Sigmoid colon (tissue), 7 donors: ENCODE measurements at regions of chr3 and their contacts with region 1.

Region 1: DNA sequence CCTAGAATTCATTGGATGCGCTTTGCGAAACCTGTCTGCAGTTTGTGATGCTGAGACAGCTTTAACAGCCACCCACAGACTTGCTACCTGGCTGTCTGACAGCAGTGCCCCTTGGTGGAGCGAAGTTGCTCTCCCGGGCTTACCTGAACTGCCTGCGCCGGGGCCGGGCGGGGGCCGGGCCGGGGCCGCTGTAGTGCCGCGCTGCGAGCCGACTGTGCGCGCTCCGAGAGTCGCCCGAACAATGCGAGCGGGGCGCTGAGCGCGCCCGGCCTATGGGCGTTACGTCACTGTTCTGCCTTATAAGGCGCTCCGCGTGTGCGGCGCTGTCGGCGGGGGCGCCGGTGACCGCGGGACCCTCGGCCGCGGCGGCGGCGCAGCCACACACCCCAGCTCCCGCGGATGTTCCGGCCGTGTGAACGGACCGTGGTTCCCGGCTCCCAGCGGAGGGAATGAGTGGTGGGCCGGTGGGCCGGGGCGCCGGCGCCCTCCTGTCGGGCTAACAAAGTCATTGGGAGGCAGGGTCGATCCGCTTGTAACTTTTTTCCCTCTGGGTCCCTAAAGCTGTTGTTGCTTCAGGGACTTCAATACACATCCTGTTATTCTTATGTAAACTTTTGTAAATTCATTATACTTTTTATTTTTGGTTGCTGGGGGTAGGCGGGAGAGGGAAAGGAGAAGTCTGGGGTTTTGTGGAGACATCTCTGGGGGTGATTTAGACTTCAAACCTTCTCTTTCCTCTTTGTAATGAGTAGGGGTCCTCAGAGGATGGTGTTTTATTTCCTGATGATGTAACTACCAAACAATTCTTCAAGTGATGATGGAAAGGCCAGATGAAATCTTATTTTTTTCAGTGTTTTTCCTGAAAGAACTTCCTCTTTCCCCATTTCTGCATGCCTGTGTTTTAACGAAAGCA is 58.5 kb downstream of the CMSS1 start:
- DNase-seq: peak; percentile 93
- H3K4me3 ChIP-seq: peak overlapping the region; percentile 62 to 82 (median 66)
- H3K27ac ChIP-seq: peak overlapping the region; percentile 90 to 95 (median 93)
- H3K4me1 ChIP-seq: peaks cover 4 to 40% (median 24%) of the 10 kb centered on the region in 4 donors
- H3K27me3 ChIP-seq: no peaks in the 10 kb centered on the region
- CTCF ChIP-seq: no peak
- EP300 ChIP-seq: no peak
- POLR2A ChIP-seq: peak; percentile 68 to 85

Region 2: GRCh38 chr3:99925584-99926212 is 49.5 kb after region 1 on chr3:
- intact Hi-C with region 1: loop called (anchors 5 kb)
- DNase-seq: peak; percentile 79
- H3K4me3 ChIP-seq: no peak overlapping the region
- H3K27ac ChIP-seq: peak overlapping the region; percentile 36 to 84 (median 54)
- H3K4me1 ChIP-seq: peaks cover 0 to 49% (median 44%) of the 10 kb centered on the region in 4 donors
- H3K27me3 ChIP-seq: no peaks in the 10 kb centered on the region
- CTCF ChIP-seq: no peak
- EP300 ChIP-seq: no peak
- POLR2A ChIP-seq: no peak

Region 3: GRCh38 chr3:99945328-99945995 is 69.3 kb after region 1 on chr3:
- intact Hi-C with region 1: no loop called
- DNase-seq: no peak
- H3K4me3 ChIP-seq: no peak overlapping the region
- H3K27ac ChIP-seq: peak overlapping the region; percentile 29 to 74 (median 56)
- H3K4me1 ChIP-seq: peaks cover 0 to 47% (median 32%) of the 10 kb centered on the region in 4 donors
- H3K27me3 ChIP-seq: no peaks in the 10 kb centered on the region
- CTCF ChIP-seq: no peak
- EP300 ChIP-seq: no peak
- POLR2A ChIP-seq: no peak

Region 4: GRCh38 chr3:99957151-99957796 is 81.1 kb after region 1 on chr3:
- intact Hi-C with region 1: loop called (anchors 5 kb)
- DNase-seq: no peak
- H3K4me3 ChIP-seq: no peak overlapping the region
- H3K27ac ChIP-seq: peak overlapping the region in 2 of 4 donors; percentile 69 to 83
- H3K4me1 ChIP-seq: peaks cover 0 to 43% (median 21%) of the 10 kb centered on the region in 4 donors
- H3K27me3 ChIP-seq: no peaks in the 10 kb centered on the region
- CTCF ChIP-seq: no peak
- EP300 ChIP-seq: no peak
- POLR2A ChIP-seq: no peak

Region 5: DNA sequence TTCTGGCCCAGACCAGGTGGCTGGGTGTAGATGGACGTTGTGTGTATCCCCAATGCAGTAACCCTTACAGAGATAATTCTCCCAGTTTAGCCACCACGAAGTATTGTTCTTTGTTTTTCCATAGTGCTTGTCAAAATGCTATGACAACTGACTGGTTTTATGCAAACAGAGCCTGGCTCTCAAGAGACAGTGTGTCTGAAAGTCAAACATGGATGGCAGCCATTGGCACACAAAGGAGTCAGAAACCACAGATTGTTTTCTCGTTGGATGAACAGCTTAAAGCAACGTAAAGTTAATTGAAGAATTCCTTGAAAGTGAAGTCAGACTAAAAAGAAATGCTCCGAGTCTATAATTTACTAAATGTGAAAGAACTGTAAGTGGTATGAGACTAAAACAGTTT is 147.0 kb after region 1 on chr3:
- intact Hi-C with region 1: no loop called
- DNase-seq: no peak
- H3K4me3 ChIP-seq: no peak overlapping the region
- H3K27ac ChIP-seq: peak overlapping the region in 1 of 4 donors; percentile 62
- H3K4me1 ChIP-seq: peaks cover 0 to 20% (median 6%) of the 10 kb centered on the region in 4 donors
- H3K27me3 ChIP-seq: no peaks in the 10 kb centered on the region
- CTCF ChIP-seq: no peak
- EP300 ChIP-seq: no peak
- POLR2A ChIP-seq: no peak

Region 6: GRCh38 chr3:100044369-100044768 is 168.2 kb after region 1 on chr3:
- intact Hi-C with region 1: loop called (anchors 5 kb)
- DNase-seq: no peak
- H3K4me3 ChIP-seq: no peak overlapping the region
- H3K27ac ChIP-seq: peak overlapping the region; percentile 20 to 92 (median 89)
- H3K4me1 ChIP-seq: peaks cover 0 to 69% (median 61%) of the 10 kb centered on the region in 4 donors
- H3K27me3 ChIP-seq: no peaks in the 10 kb centered on the region
- CTCF ChIP-seq: no peak
- EP300 ChIP-seq: peak in 1 of 4 donors; percentile 16
- POLR2A ChIP-seq: no peak